ENCODE measurements at regions of chr6 and their contacts with region 1.

Region 1: DNA sequence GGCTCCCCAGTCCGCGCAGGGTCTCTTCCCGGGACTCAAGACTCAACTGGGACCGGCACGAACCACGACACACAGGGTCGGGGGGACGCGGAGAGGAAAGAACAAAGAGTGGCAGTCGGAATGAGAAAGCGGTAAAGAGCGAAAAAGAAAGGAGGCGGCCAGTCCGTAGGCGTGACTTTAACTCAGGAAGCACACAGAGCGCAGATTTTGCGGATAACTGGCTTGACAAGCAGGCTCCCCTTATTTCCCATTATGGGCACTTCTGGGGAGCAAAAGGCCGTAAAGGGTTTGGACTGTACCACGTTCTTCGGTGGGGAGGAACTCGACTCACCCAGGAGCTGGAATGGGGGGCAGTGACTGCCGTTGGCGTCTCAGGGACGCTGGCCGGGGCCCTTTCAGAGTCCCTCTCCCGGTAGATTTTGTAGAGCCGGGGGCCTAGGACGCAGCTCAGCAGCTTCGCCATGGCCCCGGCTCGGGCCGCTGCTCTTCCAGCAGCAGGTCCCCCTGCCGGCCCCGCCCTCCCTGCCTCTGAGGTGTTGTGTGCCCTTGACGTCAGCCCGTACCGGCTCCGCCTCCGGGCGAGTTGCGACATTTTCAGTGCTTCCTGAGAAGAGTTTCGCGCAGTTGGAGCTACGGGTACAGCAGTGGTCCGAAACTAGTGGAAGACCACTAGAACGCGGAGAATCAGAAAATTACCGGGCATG is at the start of gene ABHD16A:
- DNase-seq: peak; percentile 98
- ATAC-seq: peak; percentile 93
- H3K4me3 ChIP-seq: peak within 1 kb of the TSS; percentile 71 to 84 (median 81)
- H3K27ac ChIP-seq: peak within 1 kb of the TSS; percentile 85
- H3K4me1 ChIP-seq: peaks cover 39% of the 10 kb centered on the region
- H3K27me3 ChIP-seq: peaks cover 0 to 3% of the 10 kb centered on the region in 2 experiments; a peak in 2 of 5 replicates
- CTCF ChIP-seq: peak; percentile 33
- EP300 ChIP-seq: peak; percentile 56 to 79; a peak in 3 of 4 replicates
- POLR2A ChIP-seq: peak; percentile 93 to 96
- RAD21 ChIP-seq: no peak
- total RNA-seq, gene ABHD16A: 16.2 and 43.5 TPM in 2 replicates

Region 2: DNA sequence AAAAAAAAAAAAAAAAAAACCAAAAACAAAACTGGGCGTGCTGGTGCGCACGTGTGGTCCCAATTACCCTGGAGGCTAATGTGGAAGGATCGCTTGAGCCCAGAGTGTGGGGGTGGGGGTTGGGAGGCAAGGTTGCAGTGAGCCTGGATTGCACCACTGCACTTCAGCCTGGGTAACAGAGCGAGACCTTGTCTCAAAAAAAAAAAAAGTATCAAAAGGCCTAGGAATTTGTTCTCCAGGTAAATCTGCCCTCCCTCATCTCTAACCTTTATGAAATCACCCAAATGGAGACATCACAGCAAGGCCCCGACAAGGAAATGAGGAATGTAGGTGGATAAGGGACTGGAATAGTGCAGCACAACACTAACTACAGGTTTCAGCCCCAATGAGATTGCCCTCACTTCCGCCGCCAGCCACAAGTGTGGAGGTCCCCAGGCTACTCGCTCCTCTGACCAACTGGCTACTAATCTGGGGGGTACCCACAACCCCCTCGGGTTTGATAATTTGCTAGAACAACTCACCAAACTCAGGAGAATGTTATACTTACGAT is 855.5 kb before region 1 on chr6:
- CTCF ChIA-PET with region 1: no interaction called
- POLR2A ChIA-PET with region 1: no interaction called
- in situ Hi-C with region 1: no loop called
- intact Hi-C with region 1: no loop called
- DNase-seq: no peak
- ATAC-seq: peak; percentile 65
- H3K4me3 ChIP-seq: no peak overlapping the region; a peak in 1 of 6 replicates
- H3K27ac ChIP-seq: no peak overlapping the region
- H3K4me1 ChIP-seq: peaks cover 24% of the 10 kb centered on the region
- H3K27me3 ChIP-seq: peaks cover 0 to 6% of the 10 kb centered on the region in 2 experiments; a peak in 3 of 5 replicates
- CTCF ChIP-seq: no peak
- EP300 ChIP-seq: no peak
- POLR2A ChIP-seq: no peak
- RAD21 ChIP-seq: no peak

Region 3: GRCh38 chr6:31614075-31614619 is 88.8 kb before region 1 on chr6:
- CTCF ChIA-PET with region 1: no interaction called
- POLR2A ChIA-PET with region 1: no interaction called
- in situ Hi-C with region 1: no loop called
- intact Hi-C with region 1: no loop called
- DNase-seq: peak; percentile 44
- ATAC-seq: peak; percentile 83
- H3K4me3 ChIP-seq: peak overlapping the region; percentile 38 to 66 (median 50)
- H3K27ac ChIP-seq: peak overlapping the region; percentile 50
- H3K4me1 ChIP-seq: peaks cover 43% of the 10 kb centered on the region
- H3K27me3 ChIP-seq: no peaks in the 10 kb centered on the region; a peak in 1 of 5 replicates
- CTCF ChIP-seq: no peak
- EP300 ChIP-seq: no peak
- POLR2A ChIP-seq: peak in 1 of 2 experiments; percentile 43; a peak in 2 of 4 replicates
- RAD21 ChIP-seq: no peak

Region 4: GRCh38 chr6:31660381-31661261 is 42.4 kb before region 1 on chr6 and contains the start of gene C6orf47:
- CTCF ChIA-PET with region 1: no interaction called
- POLR2A ChIA-PET with region 1: interaction called, 23 read pairs
- in situ Hi-C with region 1: no loop called
- intact Hi-C with region 1: no loop called
- DNase-seq: peak; percentile 79
- ATAC-seq: peak; percentile 66
- H3K4me3 ChIP-seq: peak within 1 kb of the TSS; percentile 56 to 78 (median 68)
- H3K27ac ChIP-seq: peak within 1 kb of the TSS; percentile 73
- H3K4me1 ChIP-seq: peaks cover 86% of the 10 kb centered on the region
- H3K27me3 ChIP-seq: no peaks in the 10 kb centered on the region; a peak in 1 of 5 replicates
- CTCF ChIP-seq: no peak; the same call in 1 of the 2 replicates
- EP300 ChIP-seq: no peak
- POLR2A ChIP-seq: peak in 1 of 2 experiments; percentile 59; a peak in 1 of 4 replicates
- RAD21 ChIP-seq: peak; percentile 36; the same call in 1 of the 2 replicates
- total RNA-seq, gene C6orf47: 15.5 and 18.1 TPM in 2 replicates

Region 5: GRCh38 chr6:31665501-31666336 is 37.3 kb before region 1 on chr6 and contains the start of gene CSNK2B:
- CTCF ChIA-PET with region 1: no interaction called
- POLR2A ChIA-PET with region 1: interaction called, 23 read pairs
- in situ Hi-C with region 1: no loop called
- intact Hi-C with region 1: no loop called
- DNase-seq: peak; percentile 99
- ATAC-seq: peak; percentile 83
- H3K4me3 ChIP-seq: peak within 1 kb of the TSS; percentile 93 to 98 (median 94)
- H3K27ac ChIP-seq: peak within 1 kb of the TSS; percentile 99
- H3K4me1 ChIP-seq: peaks cover 71% of the 10 kb centered on the region
- H3K27me3 ChIP-seq: no peaks in the 10 kb centered on the region; a peak in 1 of 5 replicates
- CTCF ChIP-seq: peak; percentile 21
- EP300 ChIP-seq: 0 out of 4 replicates have a peak, but pooled peaks of 1 of the 2 experiments have one; percentile 1
- POLR2A ChIP-seq: peak in 1 of 2 experiments; percentile 98; a peak in 2 of 4 replicates
- RAD21 ChIP-seq: peak; percentile 8; the same call in 1 of the 2 replicates
- total RNA-seq, gene CSNK2B: 296 and 316 TPM in 2 replicates

Region 6: GRCh38 chr6:31690231-31691077 is 12.5 kb before region 1 on chr6:
- CTCF ChIA-PET with region 1: no interaction called
- POLR2A ChIA-PET with region 1: interaction called, 22 read pairs
- in situ Hi-C with region 1: no loop called
- intact Hi-C with region 1: no loop called
- DNase-seq: no peak
- ATAC-seq: no peak; the same call in 2 of the 3 replicates
- H3K4me3 ChIP-seq: no peak overlapping the region
- H3K27ac ChIP-seq: no peak overlapping the region
- H3K4me1 ChIP-seq: peaks cover 12% of the 10 kb centered on the region; the same call in 1 of the 2 replicates
- H3K27me3 ChIP-seq: no peaks in the 10 kb centered on the region
- CTCF ChIP-seq: no peak
- EP300 ChIP-seq: no peak
- POLR2A ChIP-seq: no peak
- RAD21 ChIP-seq: no peak

Region 7: DNA sequence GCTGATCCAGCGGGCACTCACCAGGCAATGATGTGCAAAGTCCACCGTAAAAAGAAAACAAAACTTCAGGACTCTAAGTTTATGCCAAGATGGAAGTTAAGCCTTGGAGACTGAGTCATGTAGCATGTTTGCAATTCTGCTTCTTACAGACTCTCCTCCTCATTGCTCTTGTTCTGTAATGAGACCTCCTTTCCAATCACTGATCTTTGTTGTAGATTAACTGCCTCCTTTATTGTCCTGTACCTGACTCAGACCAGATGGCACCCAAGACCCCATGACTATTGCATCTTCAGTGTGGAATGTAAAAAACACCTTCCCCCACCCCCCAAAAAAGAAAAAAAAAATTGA is 148.5 kb after region 1 on chr6:
- CTCF ChIA-PET with region 1: no interaction called
- POLR2A ChIA-PET with region 1: no interaction called
- in situ Hi-C with region 1: no loop called
- intact Hi-C with region 1: no loop called
- DNase-seq: no peak
- ATAC-seq: peak; percentile 9
- H3K4me3 ChIP-seq: no peak overlapping the region
- H3K27ac ChIP-seq: peak overlapping the region; percentile 43
- H3K4me1 ChIP-seq: peaks cover 35% of the 10 kb centered on the region
- H3K27me3 ChIP-seq: no peaks in the 10 kb centered on the region
- CTCF ChIP-seq: no peak
- EP300 ChIP-seq: no peak
- POLR2A ChIP-seq: no peak
- RAD21 ChIP-seq: no peak

Measured in HepG2 (cell line).